ENCODE measurements at regions of chr17 and their contacts with region 1.

Region 1: GRCh38 chr17:16415031-16415924 is at the start of gene TRPV2:
- DNase-seq: peak; percentile 83
- H3K4me3 Mint-ChIP-seq: peak within 1 kb of the TSS; percentile 100
- H3K27ac Mint-ChIP-seq: peak within 1 kb of the TSS; percentile 100
- H3K4me1 Mint-ChIP-seq: peaks cover 41% of the 10 kb centered on the region
- H3K27me3 Mint-ChIP-seq: no peaks in the 10 kb centered on the region
- total RNA-seq, gene TRPV2: 29.6 and 38.7 TPM in 2 replicates

Region 2: DNA sequence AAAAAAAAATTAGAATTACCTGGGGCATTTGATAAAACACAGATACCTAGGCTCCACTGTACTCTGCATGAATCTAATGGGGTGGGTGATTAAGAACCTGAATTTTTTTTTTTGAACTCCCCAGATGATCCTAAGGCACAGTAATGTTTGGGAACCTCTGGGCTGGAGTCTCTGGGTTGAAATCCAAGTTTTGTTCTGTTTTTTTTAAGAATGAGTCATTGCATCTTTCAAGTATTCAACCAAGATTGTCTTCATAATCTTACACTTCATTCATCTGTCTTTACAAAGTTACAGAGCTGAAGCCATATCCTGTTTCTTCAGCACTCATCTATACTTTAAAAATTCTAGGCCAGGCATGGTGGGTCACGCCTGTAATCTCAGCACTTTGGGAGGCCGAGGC is 145.6 kb before region 1 on chr17:
- intact Hi-C with region 1: no loop called
- DNase-seq: no peak
- H3K4me3 Mint-ChIP-seq: no peak overlapping the region
- H3K27ac Mint-ChIP-seq: peak overlapping the region; percentile 45
- H3K4me1 Mint-ChIP-seq: peaks cover 22% of the 10 kb centered on the region
- H3K27me3 Mint-ChIP-seq: no peaks in the 10 kb centered on the region

Region 3: GRCh38 chr17:16329519-16330271 is 85.6 kb before region 1 on chr17:
- intact Hi-C with region 1: no loop called
- DNase-seq: no peak
- H3K4me3 Mint-ChIP-seq: no peak overlapping the region
- H3K27ac Mint-ChIP-seq: no peak overlapping the region
- H3K4me1 Mint-ChIP-seq: no peaks in the 10 kb centered on the region
- H3K27me3 Mint-ChIP-seq: no peaks in the 10 kb centered on the region

Region 4: GRCh38 chr17:16363749-16364536 is 51.3 kb before region 1 on chr17:
- intact Hi-C with region 1: loop called (anchors 10 kb)
- DNase-seq: peak; percentile 92
- H3K4me3 Mint-ChIP-seq: no peak overlapping the region
- H3K27ac Mint-ChIP-seq: no peak overlapping the region
- H3K4me1 Mint-ChIP-seq: no peaks in the 10 kb centered on the region
- H3K27me3 Mint-ChIP-seq: no peaks in the 10 kb centered on the region

Region 5: DNA sequence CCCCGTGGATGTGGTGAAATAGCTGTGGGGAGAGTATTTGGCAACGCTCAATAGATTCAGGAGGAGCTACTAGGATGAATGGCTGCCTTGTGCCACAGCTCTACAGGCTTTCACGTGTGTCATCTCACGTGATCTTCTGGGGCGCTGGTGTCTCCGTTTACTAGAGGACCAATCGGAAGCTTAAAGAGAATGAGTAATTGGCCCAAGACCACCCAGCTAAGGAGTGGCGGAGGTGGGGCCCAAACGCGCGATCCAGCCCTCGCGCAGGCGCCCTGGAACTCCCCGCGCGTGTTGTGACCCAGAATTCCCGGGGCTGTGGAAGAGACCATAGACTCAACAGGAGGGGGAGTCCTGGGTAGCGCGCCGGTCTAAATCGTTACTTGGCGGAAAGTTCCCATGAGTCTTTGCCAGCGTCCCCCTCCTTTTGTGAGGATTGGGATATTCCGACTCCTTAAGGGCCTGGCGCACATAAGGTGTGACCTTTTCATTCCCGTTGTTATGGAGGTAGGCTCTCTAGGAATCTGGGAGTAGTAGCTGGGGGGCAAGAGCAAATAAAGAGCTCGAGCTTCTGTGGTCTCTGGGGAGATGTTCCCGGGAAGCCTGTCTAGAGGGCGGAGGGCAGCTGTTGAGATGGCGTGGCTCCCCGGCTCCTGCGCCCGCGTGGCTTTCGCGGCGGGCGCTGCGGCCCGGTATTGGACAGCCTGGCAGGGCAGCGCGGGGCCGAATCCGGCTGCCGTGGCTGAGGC is 23.5 kb after region 1 on chr17:
- intact Hi-C with region 1: loop called (anchors 1 kb)
- DNase-seq: peak; percentile 98
- H3K4me3 Mint-ChIP-seq: peak overlapping the region; percentile 99
- H3K27ac Mint-ChIP-seq: peak overlapping the region; percentile 99
- H3K4me1 Mint-ChIP-seq: peaks cover 45% of the 10 kb centered on the region
- H3K27me3 Mint-ChIP-seq: no peaks in the 10 kb centered on the region

Measured in activated CD4-positive, alpha-beta T cell treated with anti-CD3 and anti-CD28 coated beads, Interleukin-2, amount 10 ng/mL, durations not matched to agents 24 days and 14 days (primary cell).